Mammary epithelial cell (primary cell): ENCODE measurements at regions of chr14 and their contacts with region 1.

Region 1: DNA sequence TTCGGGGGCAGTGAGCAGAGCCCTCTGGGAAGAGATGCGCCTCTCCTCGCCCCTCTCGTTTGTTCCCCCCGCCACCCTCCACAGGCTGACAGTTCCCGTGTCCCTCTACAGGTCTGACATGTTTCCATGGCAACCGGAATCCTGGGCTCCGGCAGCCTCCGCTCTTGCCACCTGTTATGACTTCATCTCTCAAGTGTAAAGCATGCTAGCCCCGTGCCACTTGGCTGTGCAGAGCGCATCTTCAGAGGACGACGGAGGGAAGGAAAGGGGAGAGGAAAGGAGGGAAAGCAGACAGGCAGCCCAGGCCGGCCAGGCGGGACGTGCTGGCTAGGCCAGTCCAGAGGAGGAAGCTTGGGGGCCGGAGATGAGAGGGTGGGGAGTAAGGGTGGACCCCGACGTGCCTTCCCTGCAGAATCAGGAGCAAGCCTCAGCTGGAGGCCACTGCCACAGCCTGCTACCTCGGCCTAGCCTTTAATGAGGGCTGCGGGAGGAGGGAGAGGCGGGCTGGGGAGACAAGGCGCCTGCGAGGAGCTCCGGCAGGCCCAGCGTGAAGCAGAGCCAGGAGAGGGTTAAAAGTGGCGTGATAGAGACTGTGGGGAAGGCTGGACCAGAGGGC is 214.3 kb downstream of the DPF3 start:
- DNase-seq: no peak
- H3K4me3 ChIP-seq: no peak overlapping the region
- H3K27ac ChIP-seq: no peak overlapping the region
- H3K4me1 ChIP-seq: peaks cover 22% of the 10 kb centered on the region
- H3K27me3 ChIP-seq: no peaks in the 10 kb centered on the region
- CTCF ChIP-seq: no peak

Region 2: GRCh38 chr14:72715215-72715849 is 35.7 kb after region 1 on chr14:
- CTCF ChIA-PET with region 1: no interaction called
- dilution Hi-C with region 1: loop called (anchors 5 kb)
- in situ Hi-C with region 1: no loop called
- intact Hi-C with region 1: no loop called
- DNase-seq: no peak
- H3K4me3 ChIP-seq: no peak overlapping the region
- H3K27ac ChIP-seq: no peak overlapping the region
- H3K4me1 ChIP-seq: no peaks in the 10 kb centered on the region
- H3K27me3 ChIP-seq: no peaks in the 10 kb centered on the region
- CTCF ChIP-seq: no peak

Region 3: GRCh38 chr14:72763892-72764291 is 84.2 kb after region 1 on chr14:
- CTCF ChIA-PET with region 1: no interaction called
- dilution Hi-C with region 1: loop called (anchors 5 kb)
- in situ Hi-C with region 1: no loop called
- intact Hi-C with region 1: no loop called
- DNase-seq: no peak
- H3K4me3 ChIP-seq: no peak overlapping the region
- H3K27ac ChIP-seq: no peak overlapping the region
- H3K4me1 ChIP-seq: no peaks in the 10 kb centered on the region
- H3K27me3 ChIP-seq: no peaks in the 10 kb centered on the region
- CTCF ChIP-seq: no peak